Cardiac septum (tissue), 1 donor: ENCODE measurements at regions of chr16 and their contacts with region 1.

Region 1: DNA sequence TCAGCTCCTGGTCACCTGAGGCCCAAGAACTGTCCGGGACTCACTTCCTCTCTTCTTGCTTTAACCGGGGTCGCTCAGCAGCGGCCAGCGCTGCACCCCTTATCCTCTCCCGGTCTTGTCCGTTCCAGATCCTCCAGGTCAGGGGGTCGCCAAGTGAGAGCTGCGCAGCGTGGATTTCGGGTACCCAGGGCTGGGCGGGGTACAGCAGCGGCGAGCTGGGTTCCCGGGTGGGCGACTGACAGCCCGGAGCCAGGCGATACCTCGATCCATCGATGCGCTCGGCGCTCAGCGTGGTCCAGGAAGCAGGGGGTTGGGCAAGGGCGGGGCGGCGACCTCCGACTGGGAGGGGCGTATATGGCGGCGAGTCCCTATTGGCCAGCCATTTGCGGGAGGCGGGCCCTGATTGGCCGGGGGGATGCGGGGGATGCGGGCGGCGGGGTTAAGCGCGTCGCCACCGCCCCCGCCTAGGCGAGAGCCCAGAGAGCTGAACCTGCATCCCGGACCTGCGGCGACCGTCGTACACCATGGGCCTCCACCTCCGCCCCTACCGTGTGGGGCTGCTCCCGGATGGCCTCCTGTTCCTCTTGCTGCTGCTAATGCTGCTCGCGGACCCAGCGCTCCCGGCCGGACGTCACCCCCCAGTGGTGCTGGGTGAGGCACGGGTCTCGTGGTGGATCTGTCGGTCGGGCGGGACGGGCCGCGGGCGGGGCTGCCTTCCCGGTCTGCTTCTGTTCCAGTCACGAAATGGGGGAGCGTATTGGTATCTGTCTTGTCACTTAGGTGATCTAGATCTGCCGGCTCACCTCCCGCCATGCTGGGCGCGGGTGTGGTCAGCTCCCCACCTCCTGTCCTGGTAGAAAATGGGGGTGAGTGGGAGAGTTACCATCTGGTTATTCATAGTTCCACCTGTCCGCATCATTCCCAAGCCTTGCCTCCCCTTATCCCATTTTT is at the start of gene PLA2G15:
- DNase-seq: peak; percentile 98
- total RNA-seq, gene PLA2G15: 46.7 TPM

Region 2: DNA sequence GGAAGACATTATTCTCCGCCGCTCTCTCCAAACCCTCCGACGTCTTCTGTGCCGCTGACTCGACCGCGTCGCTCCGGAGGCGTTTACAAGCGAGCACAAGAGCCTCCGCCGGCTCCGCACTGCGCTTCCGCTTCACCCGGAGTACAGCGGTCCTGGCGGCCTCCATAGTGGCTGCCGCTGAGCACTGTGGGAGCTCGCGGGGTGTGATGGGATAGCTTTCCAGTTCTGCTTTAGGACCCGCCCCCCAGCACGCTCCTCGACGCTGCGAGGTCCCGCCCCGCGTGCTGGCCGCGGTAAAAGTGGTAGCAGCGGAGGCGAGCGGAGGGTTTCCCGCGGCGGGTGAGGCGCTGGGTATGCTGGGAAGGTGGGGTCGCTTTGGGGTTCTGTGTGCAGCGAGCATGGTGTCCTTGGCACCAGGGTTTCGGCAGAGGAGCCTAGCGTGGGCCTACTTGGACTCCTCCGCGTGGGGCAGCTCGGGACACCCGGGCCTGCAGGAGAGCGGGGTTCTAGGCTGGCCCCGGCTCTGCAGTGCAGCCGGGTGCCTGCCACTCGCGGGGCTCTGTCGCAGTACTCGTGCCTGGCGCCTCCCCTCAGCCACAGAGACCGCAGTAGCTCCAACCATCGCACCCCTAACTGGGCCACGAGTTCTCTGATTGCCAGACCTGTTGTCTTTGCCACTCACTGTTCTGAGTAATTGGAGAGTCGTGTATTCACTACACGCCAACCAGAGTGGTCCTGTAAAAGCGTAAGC is 65.8 kb after region 1 on chr16 and contains the starts of genes PRMT7 and SLC7A6OS:
- intact Hi-C with region 1: loop called (anchors 5 kb)
- DNase-seq: peak; percentile 97
- total RNA-seq, gene PRMT7: 24.2 TPM
- total RNA-seq, gene SLC7A6OS: 14.5 TPM

Region 3: GRCh38 chr16:68328151-68328859 is 83.1 kb after region 1 on chr16:
- intact Hi-C with region 1: loop called (anchors 1 kb)
- DNase-seq: peak; percentile 91